ENCODE measurements at regions of chr4 and their contacts with region 1.

Region 1: GRCh38 chr4:142353149-142353738 is 492.9 kb downstream of the INPP4B start:
- DNase-seq: no peak
- H3K4me3 ChIP-seq: no peak overlapping the region
- H3K27ac ChIP-seq: peak overlapping the region in 1 of 4 donors; percentile 33
- H3K4me1 ChIP-seq: peaks cover 43 to 58% (median 47%) of the 10 kb centered on the region in 4 donors
- H3K27me3 ChIP-seq: no peaks in the 10 kb centered on the region
- CTCF ChIP-seq: peak; percentile 75 to 92 (median 90)
- EP300 ChIP-seq: no peak
- POLR2A ChIP-seq: no peak

Region 2: GRCh38 chr4:142567199-142567598 is 214.0 kb after region 1 on chr4:
- intact Hi-C with region 1: loop called (anchors 10 kb)
- DNase-seq: no peak
- H3K4me3 ChIP-seq: no peak overlapping the region
- H3K27ac ChIP-seq: peak overlapping the region in 3 of 4 donors; percentile 62 to 71 (median 64)
- H3K4me1 ChIP-seq: peaks cover 4 to 22% (median 15%) of the 10 kb centered on the region in 4 donors
- H3K27me3 ChIP-seq: no peaks in the 10 kb centered on the region
- CTCF ChIP-seq: no peak
- EP300 ChIP-seq: no peak
- POLR2A ChIP-seq: no peak

Region 3: GRCh38 chr4:142719854-142720541 is 366.8 kb after region 1 on chr4:
- intact Hi-C with region 1: loop called (anchors 10 kb)
- DNase-seq: no peak
- H3K4me3 ChIP-seq: no peak overlapping the region
- H3K27ac ChIP-seq: no peak overlapping the region
- H3K4me1 ChIP-seq: no peaks in the 10 kb centered on the region
- H3K27me3 ChIP-seq: no peaks in the 10 kb centered on the region
- CTCF ChIP-seq: peak in 2 of 3 experiments; percentile 28 to 42
- EP300 ChIP-seq: no peak
- POLR2A ChIP-seq: no peak

Region 4: GRCh38 chr4:142846729-142847596 is 493.7 kb after region 1 on chr4:
- intact Hi-C with region 1: loop called (anchors 5 kb)
- DNase-seq: no peak
- H3K4me3 ChIP-seq: peak overlapping the region; percentile 69 to 77 (median 72)
- H3K27ac ChIP-seq: peak overlapping the region; percentile 72 to 79 (median 74)
- H3K4me1 ChIP-seq: peaks cover 15 to 30% (median 26%) of the 10 kb centered on the region in 4 donors
- H3K27me3 ChIP-seq: peaks cover 0 to 7% (median 0%) of the 10 kb centered on the region in 4 donors
- CTCF ChIP-seq: peak; percentile 31 to 36 (median 36)
- EP300 ChIP-seq: no peak
- POLR2A ChIP-seq: no peak

Region 5: GRCh38 chr4:143085224-143085623 is 732.0 kb after region 1 on chr4:
- intact Hi-C with region 1: loop called (anchors 10 kb)
- DNase-seq: no peak
- H3K4me3 ChIP-seq: no peak overlapping the region
- H3K27ac ChIP-seq: no peak overlapping the region
- H3K4me1 ChIP-seq: peaks cover 0 to 8% (median 0%) of the 10 kb centered on the region in 4 donors
- H3K27me3 ChIP-seq: no peaks in the 10 kb centered on the region
- CTCF ChIP-seq: peak; percentile 25 to 37 (median 31)
- EP300 ChIP-seq: no peak
- POLR2A ChIP-seq: no peak